Motor neuron (in vitro differentiated cells): ENCODE measurements at regions of chr22 and their contacts with region 1.

Region 1: GRCh38 chr22:33188326-33188725 is 130.1 kb upstream of the SYN3 start:
- ATAC-seq: peak in 5 of 8 experiments; percentile 83 to 95 (median 89)
- H3K4me3 ChIP-seq: no peak overlapping the region
- H3K27ac ChIP-seq: no peak overlapping the region
- H3K4me1 ChIP-seq: peaks cover 0 to 2% of the 10 kb centered on the region in 2 donors

Region 2: GRCh38 chr22:33083212-33083611 is 105.1 kb before region 1 on chr22:
- in situ Hi-C with region 1: loop called in 1 of 9 experiments (anchors 25 kb)
- ATAC-seq: peak in 1 of 8 experiments; percentile 67
- H3K4me3 ChIP-seq: no peak overlapping the region
- H3K27ac ChIP-seq: no peak overlapping the region
- H3K4me1 ChIP-seq: peaks cover 2 to 23% of the 10 kb centered on the region in 2 donors